CD14-positive monocyte (primary cell): ENCODE measurements at regions of chr22 and their contacts with region 1.

Region 1: GRCh38 chr22:30968924-30969539 is at the start of gene TUG1:
- DNase-seq: peak; percentile 96 to 98 (median 98)
- H3K4me3 ChIP-seq: peak within 1 kb of the TSS; percentile 82 to 98 (median 88)
- H3K4me3 Mint-ChIP-seq: peak within 1 kb of the TSS; percentile 94 to 95
- H3K27ac ChIP-seq: peak within 1 kb of the TSS; percentile 85 to 91
- H3K27ac Mint-ChIP-seq: peak within 1 kb of the TSS; percentile 90 to 99 (median 96)
- H3K4me1 ChIP-seq: peaks cover 18 to 28% of the 10 kb centered on the region in 2 donors
- H3K4me1 Mint-ChIP-seq: peaks cover 34% of the 10 kb centered on the region
- H3K27me3 ChIP-seq: no peaks in the 10 kb centered on the region
- H3K27me3 Mint-ChIP-seq: peaks cover 0 to 3% (median 0%) of the 10 kb centered on the region in 3 donors
- CTCF ChIP-seq: no peak
- polyA plus RNA-seq, gene TUG1: 9.9 to 81.3 (median 13.9) TPM

Region 2: DNA sequence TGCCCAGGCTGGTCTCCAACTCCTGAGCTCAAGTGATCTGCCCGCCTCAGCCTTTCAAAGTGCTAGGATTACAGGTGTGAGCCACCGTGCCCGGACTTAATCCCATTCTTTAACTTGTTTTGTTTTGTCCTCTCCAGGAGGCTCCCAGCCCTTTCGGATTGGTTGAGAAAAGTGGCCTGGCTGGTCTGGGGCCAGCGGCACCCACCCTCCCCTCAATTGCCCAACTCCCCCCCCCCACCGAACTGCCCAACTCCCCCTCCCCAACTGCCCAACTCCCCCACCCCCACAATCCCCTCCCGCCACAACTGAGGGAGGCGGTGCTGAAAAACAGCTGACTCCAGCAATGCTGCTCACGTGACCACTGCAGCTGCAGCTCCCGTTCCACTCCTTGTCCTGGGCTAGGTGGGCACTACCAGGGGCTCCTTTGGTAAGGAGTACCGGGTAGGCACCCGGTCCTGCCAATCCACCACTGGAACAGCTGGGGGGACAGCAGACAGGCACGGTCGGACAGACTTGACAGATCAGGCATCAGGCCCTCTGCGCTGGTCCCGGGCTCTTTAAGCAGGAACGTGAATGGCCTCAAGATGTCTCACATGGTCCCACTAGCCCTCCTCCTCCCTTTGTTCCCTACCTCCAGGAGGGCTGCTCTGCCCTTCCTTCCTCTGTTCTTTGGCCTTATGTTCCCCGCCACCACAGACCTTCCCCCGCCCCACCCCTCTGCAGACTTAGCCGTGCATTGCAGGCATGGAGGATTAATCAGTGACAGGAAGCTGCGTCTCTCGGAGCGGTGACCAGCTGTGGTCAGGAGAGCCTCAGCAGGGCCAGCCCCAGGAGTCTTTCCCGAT is 362.4 kb before region 1 on chr22 and contains the start of gene TCN2:
- intact Hi-C with region 1: loop called in 1 of 2 experiments (anchors 5 kb)
- DNase-seq: peak; percentile 85 to 92 (median 87)
- H3K4me3 ChIP-seq: peak within 1 kb of the TSS; percentile 43 to 80 (median 48)
- H3K4me3 Mint-ChIP-seq: peak within 1 kb of the TSS; percentile 84 to 93
- H3K27ac ChIP-seq: peak within 1 kb of the TSS; percentile 90 to 97
- H3K27ac Mint-ChIP-seq: peak within 1 kb of the TSS; percentile 95 to 100 (median 99)
- H3K4me1 ChIP-seq: peaks cover 61 to 66% of the 10 kb centered on the region in 2 donors
- H3K4me1 Mint-ChIP-seq: peaks cover 64% of the 10 kb centered on the region
- H3K27me3 ChIP-seq: no peaks in the 10 kb centered on the region
- H3K27me3 Mint-ChIP-seq: no peaks in the 10 kb centered on the region
- CTCF ChIP-seq: no peak
- polyA plus RNA-seq, gene TCN2: 27.1 to 51.7 (median 45.0) TPM

Region 3: GRCh38 chr22:31150615-31151014 is 181.6 kb after region 1 on chr22:
- intact Hi-C with region 1: loop called in 1 of 2 experiments (anchors 10 kb)
- DNase-seq: no peak
- H3K4me3 ChIP-seq: no peak overlapping the region
- H3K4me3 Mint-ChIP-seq: no peak overlapping the region
- H3K27ac ChIP-seq: no peak overlapping the region
- H3K27ac Mint-ChIP-seq: no peak overlapping the region
- H3K4me1 ChIP-seq: no peaks in the 10 kb centered on the region
- H3K4me1 Mint-ChIP-seq: peaks cover 6% of the 10 kb centered on the region
- H3K27me3 ChIP-seq: peaks cover 0 to 2% of the 10 kb centered on the region in 2 donors
- H3K27me3 Mint-ChIP-seq: peaks cover 4 to 6% (median 6%) of the 10 kb centered on the region in 3 donors
- CTCF ChIP-seq: peak; percentile 16

Region 4: DNA sequence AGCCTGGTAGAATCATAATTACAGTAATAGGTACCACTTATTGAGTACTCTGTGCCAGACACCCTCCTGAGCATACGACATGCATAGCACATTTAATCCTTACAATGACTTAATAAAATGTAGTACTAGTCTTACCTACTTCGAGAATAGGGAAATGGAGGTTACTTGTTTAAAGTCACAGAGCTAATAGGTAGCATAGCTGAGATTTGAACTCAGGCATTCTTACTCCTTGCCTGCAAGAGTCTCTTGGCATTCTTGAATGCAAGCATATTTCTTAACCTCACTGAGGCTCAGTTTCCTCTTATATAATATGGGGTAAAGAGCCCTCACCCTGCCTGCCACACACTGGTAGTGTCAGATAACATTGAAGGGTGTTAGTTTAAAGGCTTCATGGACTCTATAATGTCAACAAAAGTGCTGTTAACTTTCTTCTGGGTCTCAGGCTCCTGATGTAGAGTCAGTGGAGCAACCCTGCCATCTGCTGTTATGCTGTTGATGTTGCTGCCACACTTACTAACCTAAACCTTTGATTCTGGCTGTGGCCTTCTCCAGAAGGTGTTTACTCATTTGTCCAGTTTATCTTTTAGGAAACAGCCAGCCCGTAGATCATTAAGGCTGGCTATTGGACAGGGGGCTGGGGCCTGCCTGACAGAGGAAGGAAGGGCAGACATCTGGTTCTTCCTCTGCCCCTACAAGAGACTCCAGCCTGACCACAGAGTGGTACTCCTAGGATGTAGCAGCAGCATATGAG is 262.0 kb after region 1 on chr22:
- intact Hi-C with region 1: loop called in 1 of 2 experiments (anchors 10 kb)
- DNase-seq: peak; percentile 69 to 81 (median 75)
- H3K4me3 ChIP-seq: peak overlapping the region in 1 of 3 experiments; percentile 29
- H3K4me3 Mint-ChIP-seq: peak overlapping the region in 1 of 2 donors; percentile 61
- H3K27ac ChIP-seq: peak overlapping the region; percentile 96
- H3K27ac Mint-ChIP-seq: peak overlapping the region; percentile 94 to 99 (median 99)
- H3K4me1 ChIP-seq: peaks cover 83 to 89% of the 10 kb centered on the region in 2 donors
- H3K4me1 Mint-ChIP-seq: peaks cover 83% of the 10 kb centered on the region
- H3K27me3 ChIP-seq: no peaks in the 10 kb centered on the region
- H3K27me3 Mint-ChIP-seq: peaks cover 0 to 2% (median 0%) of the 10 kb centered on the region in 3 donors
- CTCF ChIP-seq: peak; percentile 90

Region 5: DNA sequence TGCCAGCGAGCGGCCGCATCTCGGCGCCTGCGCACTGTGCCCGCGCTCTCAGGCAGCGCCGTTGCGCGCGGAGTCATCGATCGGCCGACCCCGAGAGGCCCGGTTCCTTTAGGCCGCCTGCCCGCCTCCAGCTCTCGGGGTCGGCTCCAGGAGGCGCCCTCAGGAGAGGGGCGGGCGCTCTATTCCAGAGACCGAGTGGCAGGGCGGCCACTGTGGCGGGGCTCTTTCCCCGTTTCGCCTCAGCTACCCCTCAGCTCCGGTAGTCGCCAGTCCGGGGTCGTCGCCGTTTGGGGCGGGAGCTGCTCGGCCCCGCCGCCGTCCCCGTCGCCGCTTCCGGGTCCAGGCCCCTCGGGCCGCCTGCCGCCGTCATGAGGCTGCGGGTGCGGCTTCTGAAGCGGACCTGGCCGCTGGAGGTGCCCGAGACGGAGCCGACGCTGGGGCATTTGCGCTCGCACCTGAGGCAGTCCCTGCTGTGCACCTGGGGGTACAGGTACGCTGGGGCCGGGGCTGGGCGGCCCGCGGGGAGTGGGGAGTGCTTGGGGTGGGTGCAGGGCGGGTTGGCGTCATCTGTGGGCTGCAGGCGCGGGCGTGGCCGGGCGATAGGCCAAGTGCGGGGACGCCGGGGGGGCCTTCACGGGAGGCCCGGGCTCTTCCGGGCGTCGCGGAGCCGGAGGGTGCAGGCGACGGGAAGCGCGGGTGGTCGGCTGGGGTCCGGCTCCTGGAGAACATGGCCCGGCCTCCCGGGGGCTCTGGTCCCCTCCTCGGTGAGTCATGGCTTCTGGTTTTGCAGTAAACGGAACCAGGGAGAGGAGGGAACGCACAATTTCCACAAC is 1505.8 kb after region 1 on chr22 and contains the start of gene FBXO7:
- intact Hi-C with region 1: loop called in 1 of 2 experiments (anchors 10 kb)
- DNase-seq: peak; percentile 79 to 80 (median 79)
- H3K4me3 ChIP-seq: peak within 1 kb of the TSS; percentile 56 to 94 (median 81)
- H3K4me3 Mint-ChIP-seq: peak within 1 kb of the TSS; percentile 93 to 97
- H3K27ac ChIP-seq: peak within 1 kb of the TSS; percentile 79 to 95
- H3K27ac Mint-ChIP-seq: peak within 1 kb of the TSS; percentile 87 to 96 (median 92)
- H3K4me1 ChIP-seq: peaks cover 21 to 41% of the 10 kb centered on the region in 2 donors
- H3K4me1 Mint-ChIP-seq: peaks cover 30% of the 10 kb centered on the region
- H3K27me3 ChIP-seq: no peaks in the 10 kb centered on the region
- H3K27me3 Mint-ChIP-seq: no peaks in the 10 kb centered on the region
- CTCF ChIP-seq: no peak
- polyA plus RNA-seq, gene FBXO7: 56.7 to 116 (median 103) TPM